Ascending aorta (tissue), 2 donors: ENCODE measurements at regions of chr17 and their contacts with region 1.

Region 1: GRCh38 chr17:43778337-43779144 is at the start of gene DUSP3:
- DNase-seq: peak; percentile 92 to 98
- H3K4me3 ChIP-seq: peak within 1 kb of the TSS; percentile 82 to 93
- H3K27ac ChIP-seq: peak within 1 kb of the TSS; percentile 98 to 100
- H3K4me1 ChIP-seq: peaks cover 6 to 35% of the 10 kb centered on the region in 2 donors
- H3K27me3 ChIP-seq: no peaks in the 10 kb centered on the region
- CTCF ChIP-seq: no peak
- total RNA-seq, gene DUSP3: 70.5 TPM

Region 2: DNA sequence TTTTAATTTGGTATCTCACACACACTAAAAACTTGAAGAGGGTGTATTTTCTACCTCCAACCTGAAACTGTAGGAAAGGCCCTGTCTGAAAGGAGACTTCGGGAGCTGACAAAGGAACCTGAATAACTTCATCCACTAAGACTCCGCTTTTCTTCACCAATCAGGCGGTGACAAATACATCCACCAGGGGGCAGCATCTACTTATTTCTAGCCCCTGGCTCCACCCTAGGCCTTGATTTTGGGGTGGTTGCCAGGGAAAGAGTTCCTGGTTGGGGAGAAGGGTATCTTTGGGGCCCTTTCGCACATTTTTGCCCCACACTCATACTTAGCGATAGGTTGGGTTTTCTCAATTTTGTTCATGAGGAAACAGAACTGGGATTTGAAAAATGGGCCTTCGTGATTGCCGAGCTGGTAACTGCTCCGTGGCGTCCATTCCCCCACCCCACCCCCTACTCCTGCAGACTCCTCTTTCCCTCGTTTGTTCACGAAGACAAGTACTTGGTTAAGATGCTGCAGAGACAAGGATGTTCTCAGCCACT is 384.5 kb before region 1 on chr17:
- intact Hi-C with region 1: loop called (anchors 10 kb)
- DNase-seq: peak; percentile 46 to 96
- H3K4me3 ChIP-seq: peak overlapping the region in 1 of 2 donors; percentile 34
- H3K27ac ChIP-seq: peak overlapping the region; percentile 53 to 57
- H3K4me1 ChIP-seq: peaks cover 0 to 9% of the 10 kb centered on the region in 2 donors
- H3K27me3 ChIP-seq: no peaks in the 10 kb centered on the region
- CTCF ChIP-seq: peak; percentile 84 to 98 (median 92)

Region 3: GRCh38 chr17:43832976-43833829 is 54.7 kb after region 1 on chr17 and contains the start of gene MPP3:
- intact Hi-C with region 1: loop called (anchors 2 kb)
- DNase-seq: peak in 1 of 2 donors; percentile 81
- H3K4me3 ChIP-seq: peak within 1 kb of the TSS; percentile 91 to 96
- H3K27ac ChIP-seq: peak within 1 kb of the TSS; percentile 73 to 79
- H3K4me1 ChIP-seq: peaks cover 0 to 12% of the 10 kb centered on the region in 2 donors
- H3K27me3 ChIP-seq: no peaks in the 10 kb centered on the region
- CTCF ChIP-seq: no peak
- total RNA-seq, gene MPP3: 37.0 TPM

Region 4: DNA sequence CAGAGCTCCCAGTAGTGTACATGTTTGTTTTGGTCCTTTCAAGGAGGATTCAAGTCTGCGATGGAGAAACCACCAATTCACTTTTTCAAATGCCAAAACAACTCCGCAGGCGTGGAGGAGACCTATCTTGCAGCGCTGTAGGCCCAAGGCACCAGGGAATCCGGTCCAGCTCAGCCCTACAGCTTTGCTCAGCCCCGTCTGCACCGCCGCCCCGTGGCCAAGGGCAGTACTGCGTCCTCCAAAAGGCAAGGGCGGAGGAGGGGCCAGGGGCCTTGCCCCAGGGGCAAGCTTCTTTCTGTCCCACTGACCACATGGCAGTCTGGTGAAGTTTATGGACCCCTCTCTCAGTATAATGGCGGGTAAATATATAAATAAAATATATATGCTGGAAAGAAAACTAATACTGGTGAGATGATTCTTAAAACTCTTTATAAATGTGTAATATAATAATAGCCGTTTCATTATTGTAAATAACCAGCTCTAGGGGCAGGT is 67.7 kb after region 1 on chr17:
- intact Hi-C with region 1: loop called (anchors 5 kb)
- DNase-seq: peak; percentile 21 to 92
- H3K4me3 ChIP-seq: no peak overlapping the region
- H3K27ac ChIP-seq: no peak overlapping the region
- H3K4me1 ChIP-seq: peaks cover 0 to 12% of the 10 kb centered on the region in 2 donors
- H3K27me3 ChIP-seq: no peaks in the 10 kb centered on the region
- CTCF ChIP-seq: peak; percentile 95 to 100 (median 99)

Region 5: DNA sequence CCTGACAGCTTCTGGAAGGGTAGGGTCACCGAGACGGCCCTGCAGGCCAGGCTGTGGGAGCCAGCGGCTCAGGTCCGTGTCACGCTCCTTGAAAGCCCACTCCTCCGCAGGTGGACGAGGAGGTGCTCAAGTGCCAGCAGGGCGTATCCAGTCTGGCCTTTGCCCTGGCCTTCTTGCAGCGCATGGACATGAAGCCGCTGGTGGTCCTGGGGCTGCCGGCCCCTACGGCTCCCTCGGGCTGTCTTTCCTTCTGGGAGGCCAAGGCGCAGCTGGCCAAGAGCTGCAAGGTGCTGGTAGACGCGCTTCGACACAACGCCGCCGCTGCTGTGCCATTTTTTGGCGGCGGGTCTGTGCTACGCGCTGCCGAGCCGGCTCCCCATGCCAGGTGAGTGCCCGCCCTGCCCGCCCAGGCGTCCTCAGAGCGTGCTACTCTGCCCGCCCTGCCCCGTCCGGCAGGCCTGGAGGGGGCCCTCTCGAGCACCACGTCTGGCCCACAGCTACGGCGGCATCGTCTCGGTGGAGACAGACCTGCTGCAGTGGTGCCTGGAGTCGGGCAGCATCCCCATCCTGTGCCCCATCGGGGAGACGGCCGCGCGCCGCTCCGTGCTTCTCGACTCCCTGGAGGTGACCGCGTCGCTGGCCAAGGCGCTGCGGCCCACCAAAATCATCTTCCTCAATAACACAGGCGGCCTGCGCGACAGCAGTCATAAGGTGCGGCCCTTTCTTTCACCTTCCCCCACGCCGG is 227.2 kb after region 1 on chr17:
- intact Hi-C with region 1: no loop called
- DNase-seq: no peak
- H3K4me3 ChIP-seq: peak overlapping the region; percentile 51 to 67
- H3K27ac ChIP-seq: no peak overlapping the region
- H3K4me1 ChIP-seq: peaks cover 4 to 31% of the 10 kb centered on the region in 2 donors
- H3K27me3 ChIP-seq: no peaks in the 10 kb centered on the region
- CTCF ChIP-seq: peak in 1 of 3 experiments; percentile 30